Activated CD8-positive, alpha-beta T cell treated with anti-CD3 and anti-CD28 coated beads, Interleukin-2, amount 10 ng/mL, durations not matched to agents 7 days and 5 days (primary cell): ENCODE measurements at regions of chr11 and their contacts with region 1.

Region 1: DNA sequence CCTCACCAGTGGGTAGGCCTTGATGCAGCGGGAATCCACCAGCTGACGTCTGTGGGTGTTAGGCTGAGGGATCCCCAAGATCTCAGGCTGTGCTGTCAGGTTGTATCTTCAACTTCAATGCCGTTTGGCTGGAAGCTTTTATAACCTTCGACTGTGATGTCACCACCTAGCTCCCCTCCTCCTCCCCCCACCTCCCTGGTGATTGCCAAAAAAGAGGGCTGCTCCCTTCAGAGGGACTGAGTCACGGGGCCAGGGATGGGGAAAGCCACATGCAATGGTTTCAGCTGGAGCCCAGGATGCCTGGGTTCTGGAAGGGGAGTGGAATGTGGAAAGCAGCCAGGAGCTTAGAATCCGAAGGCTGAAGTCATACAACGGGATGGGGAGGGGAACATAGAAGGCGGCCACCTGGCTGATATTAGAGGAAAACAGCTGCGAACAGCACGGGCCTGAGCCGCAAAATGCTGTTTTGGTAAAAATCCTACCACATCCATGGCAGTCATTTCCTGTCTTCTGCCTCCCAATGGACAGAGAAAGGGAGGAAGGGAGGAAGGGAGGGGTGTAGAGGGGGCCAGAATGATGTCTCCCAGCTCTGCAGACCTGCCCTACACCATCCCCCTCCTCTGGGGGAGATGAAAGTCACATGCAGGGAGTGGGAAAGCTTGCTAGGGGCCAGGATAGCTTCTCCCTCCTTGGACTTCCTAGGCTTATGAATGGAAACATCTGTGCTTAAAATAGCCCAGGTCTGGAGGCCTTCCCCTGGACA is at the start of gene LRRN4CL:
- DNase-seq: no peak
- ATAC-seq: no peak
- H3K4me3 Mint-ChIP-seq: no peak within 1 kb of the TSS
- H3K27ac Mint-ChIP-seq: no peak within 1 kb of the TSS
- H3K4me1 Mint-ChIP-seq: peaks cover 4% of the 10 kb centered on the region
- H3K27me3 Mint-ChIP-seq: peaks cover 10% of the 10 kb centered on the region
- total RNA-seq, gene LRRN4CL: 0.21 to 0.34 TPM

Region 2: GRCh38 chr11:62678770-62679696 is 10.6 kb before region 1 on chr11 and contains the start of gene UBXN1:
- CTCF ChIA-PET with region 1: interaction called, 77 read pairs
- POLR2A ChIA-PET with region 1: interaction called, 6 read pairs
- DNase-seq: peak; percentile 89
- ATAC-seq: peak; percentile 88
- H3K4me3 Mint-ChIP-seq: peak within 1 kb of the TSS; percentile 92
- H3K27ac Mint-ChIP-seq: peak within 1 kb of the TSS; percentile 87
- H3K4me1 Mint-ChIP-seq: peaks cover 42% of the 10 kb centered on the region
- H3K27me3 Mint-ChIP-seq: no peaks in the 10 kb centered on the region
- total RNA-seq, gene UBXN1: 107 to 118 TPM

Region 3: GRCh38 chr11:62831520-62832335 is 142.1 kb after region 1 on chr11 and contains the start of gene STX5:
- CTCF ChIA-PET with region 1: no interaction called
- POLR2A ChIA-PET with region 1: no interaction called
- DNase-seq: peak; percentile 100
- ATAC-seq: peak; percentile 91
- H3K4me3 Mint-ChIP-seq: peak within 1 kb of the TSS; percentile 92
- H3K27ac Mint-ChIP-seq: peak within 1 kb of the TSS; percentile 98
- H3K4me1 Mint-ChIP-seq: peaks cover 39% of the 10 kb centered on the region
- H3K27me3 Mint-ChIP-seq: no peaks in the 10 kb centered on the region
- total RNA-seq, gene STX5: 30.4 to 32.7 TPM